ENCODE measurements at regions of chr16 and their contacts with region 1.

Region 1: GRCh38 chr16:79770244-79771064 is 169.9 kb upstream of the MAF start:
- DNase-seq: peak; percentile 10 to 73 (median 38)
- ATAC-seq: peak; percentile 91
- H3K4me3 ChIP-seq: peak overlapping the region; percentile 60
- H3K4me3 Mint-ChIP-seq: peak overlapping the region; percentile 71 to 98 (median 89)
- H3K27ac ChIP-seq: peak overlapping the region; percentile 26
- H3K27ac Mint-ChIP-seq: peak overlapping the region; percentile 4 to 94 (median 55)
- H3K4me1 ChIP-seq: no peaks in the 10 kb centered on the region
- H3K4me1 Mint-ChIP-seq: peaks cover 5 to 34% (median 28%) of the 10 kb centered on the region in 7 donors
- H3K27me3 ChIP-seq: no peaks in the 10 kb centered on the region
- H3K27me3 Mint-ChIP-seq: peaks cover 7 to 32% (median 8%) of the 10 kb centered on the region in 5 donors

Region 2: GRCh38 chr16:79628501-79628975 is 141.9 kb before region 1 on chr16:
- CTCF ChIA-PET with region 1: no interaction called
- POLR2A ChIA-PET with region 1: no interaction called
- intact Hi-C with region 1: loop called in 1 of 2 experiments (anchors 1 kb)
- DNase-seq: peak in 1 of 9 donors; percentile 79
- ATAC-seq: peak; percentile 47
- H3K4me3 ChIP-seq: no peak overlapping the region
- H3K4me3 Mint-ChIP-seq: peak overlapping the region in 1 of 10 donors; percentile 73
- H3K27ac ChIP-seq: no peak overlapping the region
- H3K27ac Mint-ChIP-seq: peak overlapping the region in 1 of 9 donors; percentile 78
- H3K4me1 ChIP-seq: peaks cover 0 to 6% of the 10 kb centered on the region in 2 donors
- H3K4me1 Mint-ChIP-seq: peaks cover 0 to 61% (median 0%) of the 10 kb centered on the region in 7 donors
- H3K27me3 ChIP-seq: no peaks in the 10 kb centered on the region
- H3K27me3 Mint-ChIP-seq: peaks cover 5 to 14% (median 10%) of the 10 kb centered on the region in 5 donors

Region 3: DNA sequence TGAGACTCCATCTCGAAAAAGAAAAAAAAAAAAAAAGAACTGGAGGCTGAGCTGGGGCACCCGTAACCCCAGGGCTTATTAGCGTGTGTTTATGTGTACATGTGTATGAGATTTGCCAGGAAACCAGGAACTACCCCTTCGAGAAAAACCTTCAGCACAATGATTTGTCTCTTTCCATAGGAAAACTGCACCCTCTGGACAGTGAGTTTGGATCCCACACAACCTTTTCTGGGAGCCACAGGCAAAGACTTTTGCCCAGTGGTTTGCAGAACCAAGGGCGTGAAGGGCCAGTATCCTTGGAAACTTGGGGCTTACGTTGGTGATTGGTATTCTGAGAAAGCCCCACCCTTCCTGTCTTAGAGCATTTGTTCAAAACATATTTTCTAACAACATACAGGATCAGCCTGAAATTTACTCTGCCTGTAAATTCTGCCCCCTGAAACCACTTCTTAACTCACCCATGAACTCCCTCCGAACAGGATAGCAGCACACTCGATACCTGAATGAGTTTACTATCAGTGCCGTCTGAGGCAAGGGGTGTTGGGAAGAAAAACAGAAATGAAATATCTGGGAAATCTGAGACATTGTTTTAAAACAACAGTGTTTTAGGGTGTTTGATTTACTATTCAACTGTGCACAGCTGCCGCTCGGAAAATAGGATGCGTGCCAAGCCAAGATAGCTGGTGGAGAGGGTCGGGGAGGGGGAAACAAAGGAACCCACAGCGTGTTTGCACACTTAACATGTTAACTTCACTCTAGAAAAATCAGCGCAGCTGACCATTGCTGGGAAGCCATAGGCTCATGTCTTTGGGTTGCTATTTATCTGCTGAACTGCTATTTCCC is 129.7 kb before region 1 on chr16:
- CTCF ChIA-PET with region 1: no interaction called
- POLR2A ChIA-PET with region 1: no interaction called
- intact Hi-C with region 1: loop called in 1 of 2 experiments (anchors 2 kb)
- DNase-seq: peak in 4 of 9 donors; percentile 1 to 35 (median 28)
- ATAC-seq: peak; percentile 34
- H3K4me3 ChIP-seq: no peak overlapping the region
- H3K4me3 Mint-ChIP-seq: peak overlapping the region; percentile 8 to 77 (median 60)
- H3K27ac ChIP-seq: no peak overlapping the region
- H3K27ac Mint-ChIP-seq: peak overlapping the region; percentile 7 to 95 (median 57)
- H3K4me1 ChIP-seq: peaks cover 3 to 5% of the 10 kb centered on the region in 2 donors
- H3K4me1 Mint-ChIP-seq: peaks cover 9 to 45% (median 28%) of the 10 kb centered on the region in 7 donors
- H3K27me3 ChIP-seq: no peaks in the 10 kb centered on the region
- H3K27me3 Mint-ChIP-seq: peaks cover 0 to 7% (median 3%) of the 10 kb centered on the region in 5 donors

Region 4: DNA sequence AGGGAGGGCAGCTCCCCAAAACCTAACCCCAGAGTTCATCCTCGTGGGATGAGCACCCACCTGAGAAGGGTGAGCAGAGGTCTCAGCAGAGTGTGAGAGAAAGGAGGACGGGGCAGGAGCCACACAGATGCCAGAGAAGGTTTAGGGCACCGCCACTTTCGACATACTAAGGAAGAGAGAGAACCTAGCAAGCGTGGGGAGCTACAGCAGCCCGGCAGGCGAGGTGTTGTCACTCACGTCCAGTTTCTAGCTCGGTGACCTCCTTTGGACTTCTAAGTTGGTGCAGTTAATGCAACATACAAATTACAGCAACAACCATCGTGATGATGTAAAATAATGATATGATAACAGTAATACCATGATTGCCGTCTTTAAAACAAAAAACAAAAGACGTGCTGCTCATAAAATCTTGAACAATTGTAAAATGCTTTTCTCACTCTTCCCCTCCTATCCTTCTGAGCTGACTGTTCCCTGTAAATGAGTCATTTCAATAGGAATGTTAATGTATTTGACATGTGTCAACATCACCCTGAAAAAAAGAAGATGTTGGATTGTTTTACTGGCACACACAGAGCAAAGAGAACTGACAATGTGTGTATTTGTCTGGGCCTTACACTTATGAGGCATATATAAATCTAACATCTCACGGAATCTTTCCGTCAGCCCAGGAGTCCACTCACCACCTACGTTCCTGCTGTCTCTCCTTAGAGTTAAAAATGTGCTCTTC is 11.7 kb before region 1 on chr16:
- CTCF ChIA-PET with region 1: no interaction called
- POLR2A ChIA-PET with region 1: no interaction called
- intact Hi-C with region 1: loop called in 1 of 2 experiments (anchors 1 kb)
- DNase-seq: no peak
- ATAC-seq: no peak
- H3K4me3 ChIP-seq: no peak overlapping the region
- H3K4me3 Mint-ChIP-seq: no peak overlapping the region
- H3K27ac ChIP-seq: no peak overlapping the region
- H3K27ac Mint-ChIP-seq: no peak overlapping the region
- H3K4me1 ChIP-seq: no peaks in the 10 kb centered on the region
- H3K4me1 Mint-ChIP-seq: peaks cover 3 to 29% (median 9%) of the 10 kb centered on the region in 7 donors
- H3K27me3 ChIP-seq: no peaks in the 10 kb centered on the region
- H3K27me3 Mint-ChIP-seq: peaks cover 0 to 25% (median 11%) of the 10 kb centered on the region in 5 donors

Region 5: DNA sequence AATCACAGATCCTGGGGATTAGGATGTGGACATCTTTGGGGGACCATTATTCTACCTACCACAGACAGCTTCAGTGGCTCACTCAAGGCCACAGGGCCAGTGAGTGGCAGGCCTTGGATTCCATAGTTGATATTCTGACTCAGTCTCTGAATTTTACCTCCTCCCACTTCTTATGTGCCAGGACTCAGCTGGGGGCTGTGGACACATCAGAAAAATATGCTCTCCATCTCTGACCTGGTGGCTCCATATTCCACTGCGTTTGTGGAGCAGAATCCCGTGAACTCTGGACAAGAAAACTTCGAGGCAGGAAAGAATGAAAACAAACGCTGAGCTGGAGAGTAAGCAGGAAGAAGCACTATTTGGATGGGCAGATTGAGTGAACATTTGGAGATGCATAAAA is 131.9 kb after region 1 on chr16:
- CTCF ChIA-PET with region 1: no interaction called
- POLR2A ChIA-PET with region 1: no interaction called
- intact Hi-C with region 1: no loop called
- DNase-seq: no peak
- ATAC-seq: no peak
- H3K4me3 ChIP-seq: no peak overlapping the region
- H3K4me3 Mint-ChIP-seq: no peak overlapping the region
- H3K27ac ChIP-seq: no peak overlapping the region
- H3K27ac Mint-ChIP-seq: no peak overlapping the region
- H3K4me1 ChIP-seq: no peaks in the 10 kb centered on the region
- H3K4me1 Mint-ChIP-seq: no peaks in the 10 kb centered on the region
- H3K27me3 ChIP-seq: no peaks in the 10 kb centered on the region
- H3K27me3 Mint-ChIP-seq: peaks cover 0 to 17% (median 5%) of the 10 kb centered on the region in 5 donors

Measured in naive thymus-derived CD4-positive, alpha-beta T cell (primary cell).